Mammary epithelial cell (primary cell): ENCODE measurements at regions of chr22 and their contacts with region 1.

Region 1: GRCh38 chr22:28594797-28595462 is 84.7 kb downstream of the TTC28 start:
- DNase-seq: peak; percentile 34
- H3K4me3 ChIP-seq: no peak overlapping the region
- H3K27ac ChIP-seq: no peak overlapping the region
- H3K4me1 ChIP-seq: no peaks in the 10 kb centered on the region
- H3K27me3 ChIP-seq: no peaks in the 10 kb centered on the region
- CTCF ChIP-seq: peak; percentile 67 to 75

Region 2: GRCh38 chr22:28019881-28020871 is 574.8 kb before region 1 on chr22:
- CTCF ChIA-PET with region 1: no interaction called
- dilution Hi-C with region 1: no loop called
- in situ Hi-C with region 1: no loop called
- intact Hi-C with region 1: loop called (anchors 1 kb)
- DNase-seq: peak; percentile 23
- H3K4me3 ChIP-seq: no peak overlapping the region
- H3K27ac ChIP-seq: no peak overlapping the region
- H3K4me1 ChIP-seq: peaks cover 4% of the 10 kb centered on the region
- H3K27me3 ChIP-seq: no peaks in the 10 kb centered on the region
- CTCF ChIP-seq: peak; percentile 85 to 95

Region 3: DNA sequence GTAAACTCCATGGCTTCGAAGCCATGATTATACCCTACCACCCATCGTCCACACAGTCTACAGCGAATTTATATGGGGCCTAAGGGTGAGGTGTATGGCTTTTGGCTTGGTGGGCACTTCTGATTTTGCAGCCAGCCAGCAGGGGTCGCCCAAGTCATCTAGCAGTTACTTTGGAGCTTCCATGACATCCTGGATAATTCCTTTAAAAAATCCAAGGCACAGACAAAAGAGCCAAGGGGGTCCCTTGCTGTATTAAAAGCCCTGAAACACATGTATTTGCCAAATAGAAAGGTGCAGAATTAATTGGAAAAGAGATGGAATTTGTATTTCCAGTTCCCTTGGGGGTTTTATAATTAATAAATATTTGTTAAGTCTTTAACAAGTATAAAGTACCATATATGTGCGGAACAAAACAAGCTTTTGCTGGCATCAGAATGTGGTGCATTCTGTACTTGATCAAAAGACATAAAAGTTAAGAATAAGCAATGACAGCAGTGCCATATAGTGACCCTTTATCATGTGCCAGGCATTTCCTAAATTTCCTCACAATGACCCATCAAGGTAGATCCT is 543.1 kb before region 1 on chr22:
- CTCF ChIA-PET with region 1: interaction called, 6 read pairs
- dilution Hi-C with region 1: no loop called
- in situ Hi-C with region 1: loop called (anchors 5 to 10 kb)
- intact Hi-C with region 1: loop called (anchors 1 kb)
- DNase-seq: peak; percentile 25
- H3K4me3 ChIP-seq: no peak overlapping the region
- H3K27ac ChIP-seq: no peak overlapping the region
- H3K4me1 ChIP-seq: no peaks in the 10 kb centered on the region
- H3K27me3 ChIP-seq: peaks cover 2% of the 10 kb centered on the region
- CTCF ChIP-seq: peak; percentile 82 to 91

Region 4: DNA sequence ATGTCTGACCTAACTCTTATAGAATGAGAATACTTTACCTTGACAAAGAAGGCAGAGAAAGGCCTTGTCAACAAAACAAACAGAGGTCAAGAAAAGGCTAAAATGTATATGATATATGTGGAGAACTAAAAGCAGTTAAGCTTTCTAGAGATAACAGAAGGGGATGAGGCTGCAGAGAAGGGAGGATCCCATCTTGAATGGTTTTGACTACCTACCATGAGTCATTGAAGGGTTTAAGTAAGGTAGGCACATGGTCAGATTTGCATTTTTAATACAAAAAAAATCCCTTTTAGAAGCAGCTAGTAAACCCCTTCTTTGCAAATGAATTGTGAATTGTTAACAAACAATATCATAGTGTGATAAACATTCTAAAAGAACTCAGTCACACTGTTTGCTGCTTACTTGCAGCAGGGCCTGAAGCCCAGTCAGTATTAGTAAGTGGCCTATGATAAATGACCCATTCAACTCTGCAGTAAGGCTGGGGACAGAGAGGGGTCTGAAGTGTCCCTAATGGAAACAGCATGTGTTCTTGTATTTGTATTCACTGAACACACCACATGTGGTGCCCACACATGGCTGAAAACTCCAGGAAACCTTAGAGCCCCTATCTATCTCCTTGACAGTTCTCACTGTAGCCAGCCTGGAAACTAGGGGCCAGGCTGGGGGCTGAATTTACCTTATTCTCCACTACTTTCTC is 347.1 kb before region 1 on chr22:
- CTCF ChIA-PET with region 1: no interaction called
- dilution Hi-C with region 1: no loop called
- in situ Hi-C with region 1: no loop called
- intact Hi-C with region 1: loop called (anchors 1 kb)
- DNase-seq: no peak
- H3K4me3 ChIP-seq: no peak overlapping the region
- H3K27ac ChIP-seq: no peak overlapping the region
- H3K4me1 ChIP-seq: no peaks in the 10 kb centered on the region
- H3K27me3 ChIP-seq: no peaks in the 10 kb centered on the region
- CTCF ChIP-seq: no peak

Region 5: DNA sequence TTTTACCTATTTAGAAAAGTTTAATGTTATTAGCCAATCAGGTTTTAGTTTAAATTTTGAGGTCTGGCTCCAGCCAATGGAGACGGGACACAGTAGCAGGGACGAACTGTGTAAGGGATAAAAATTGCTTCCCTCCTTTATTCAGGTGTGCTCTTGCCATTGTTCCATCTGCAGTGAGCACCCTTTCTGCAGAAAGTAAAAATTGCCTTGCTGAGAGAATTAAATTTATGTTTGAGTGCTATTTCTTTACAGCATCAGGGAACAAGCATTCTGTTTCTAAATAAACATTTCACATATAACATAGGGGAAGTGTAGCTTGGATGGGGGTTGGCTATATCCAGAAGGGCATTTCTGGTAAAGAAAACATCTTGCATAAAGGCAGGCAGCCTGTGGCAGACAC is 252.1 kb after region 1 on chr22:
- CTCF ChIA-PET with region 1: no interaction called
- dilution Hi-C with region 1: no loop called
- in situ Hi-C with region 1: no loop called
- intact Hi-C with region 1: no loop called
- DNase-seq: no peak
- H3K4me3 ChIP-seq: no peak overlapping the region
- H3K27ac ChIP-seq: no peak overlapping the region
- H3K4me1 ChIP-seq: no peaks in the 10 kb centered on the region
- H3K27me3 ChIP-seq: no peaks in the 10 kb centered on the region
- CTCF ChIP-seq: no peak